Caco-2 (cell line): ENCODE measurements at regions of chr20 and their contacts with region 1.

Region 1: DNA sequence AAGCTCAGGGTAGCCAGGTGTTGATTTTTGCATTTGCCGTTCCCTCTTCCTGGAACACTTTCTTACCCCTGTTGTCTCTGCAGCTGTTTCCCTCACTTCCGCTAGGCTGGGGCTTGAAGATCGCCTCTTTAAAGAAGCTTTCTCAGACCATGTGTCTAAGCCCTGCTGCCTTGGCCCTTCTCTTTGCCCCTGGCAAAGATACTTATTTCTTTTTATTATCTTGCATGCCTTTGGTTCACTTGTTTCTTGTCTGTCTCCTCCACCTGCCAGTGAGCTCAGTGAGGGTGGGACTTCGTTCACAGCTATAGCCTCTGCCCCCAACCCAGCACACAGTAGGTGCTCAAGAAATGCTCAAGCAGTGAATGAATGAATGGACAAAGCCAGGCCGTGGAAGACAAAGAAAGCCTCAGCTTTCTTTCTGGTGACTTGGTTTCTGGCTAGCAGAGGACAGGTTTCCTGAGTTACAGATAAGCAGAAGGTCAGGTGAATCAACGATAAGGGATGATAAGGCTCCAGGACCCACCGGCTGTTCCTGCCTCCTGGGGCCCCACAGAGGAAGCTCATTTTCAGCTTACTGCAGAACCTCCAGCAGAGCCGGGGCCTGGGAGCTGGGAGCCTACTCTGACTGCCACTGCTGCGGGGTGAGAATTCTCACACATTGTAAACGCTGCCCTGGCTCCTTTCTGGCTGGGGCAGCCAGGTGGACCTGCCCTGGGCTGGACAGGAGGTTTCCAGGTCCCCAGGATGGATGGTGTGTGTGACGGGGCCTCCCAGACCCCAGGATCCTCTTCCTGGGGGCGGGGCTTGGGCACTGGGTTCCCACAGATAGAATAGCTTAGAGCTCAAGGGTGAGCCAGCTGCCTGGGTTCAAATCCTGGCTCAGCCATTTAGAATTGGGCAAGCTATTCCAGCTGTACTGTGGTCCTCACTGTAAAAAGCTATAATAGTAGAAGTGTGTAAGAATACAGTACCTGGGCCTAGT is 29.8 kb downstream of the SNAI1 start:
- DNase-seq: peak; percentile 87 to 95
- H3K4me3 ChIP-seq: no peak overlapping the region
- H3K4me3 Mint-ChIP-seq: no peak overlapping the region
- H3K27ac Mint-ChIP-seq: peak overlapping the region; percentile 68
- H3K4me1 ChIP-seq: peaks cover 44% of the 10 kb centered on the region
- H3K4me1 Mint-ChIP-seq: peaks cover 29% of the 10 kb centered on the region
- H3K27me3 ChIP-seq: no peaks in the 10 kb centered on the region
- H3K27me3 Mint-ChIP-seq: no peaks in the 10 kb centered on the region
- CTCF ChIP-seq: no peak

Region 2: DNA sequence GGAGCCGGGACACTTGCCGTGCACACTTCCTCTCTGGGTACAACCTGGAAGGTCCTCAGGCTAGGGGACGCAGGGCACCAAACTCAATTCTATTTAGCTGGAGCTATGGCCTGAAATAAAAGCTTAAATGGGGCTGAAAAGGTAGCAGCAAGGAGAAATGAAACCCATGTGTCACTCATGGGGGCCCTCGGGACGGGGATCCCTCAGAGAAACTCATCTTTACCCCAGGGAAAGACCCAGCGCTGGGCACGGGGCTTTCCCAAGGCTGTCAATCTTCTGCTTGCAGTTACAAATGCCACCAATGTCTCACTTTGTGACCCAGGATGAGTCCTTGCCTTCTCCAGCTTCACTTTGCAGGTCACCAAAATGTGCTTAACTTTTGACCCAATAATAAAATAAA is 13.2 kb before region 1 on chr20:
- CTCF ChIA-PET with region 1: interaction called, 3 read pairs
- POLR2A ChIA-PET with region 1: interaction called, 4 read pairs
- intact Hi-C with region 1: loop called (anchors 2 kb)
- DNase-seq: no peak
- H3K4me3 ChIP-seq: no peak overlapping the region
- H3K4me3 Mint-ChIP-seq: no peak overlapping the region
- H3K27ac Mint-ChIP-seq: no peak overlapping the region
- H3K4me1 ChIP-seq: peaks cover 20% of the 10 kb centered on the region
- H3K4me1 Mint-ChIP-seq: peaks cover 18% of the 10 kb centered on the region
- H3K27me3 ChIP-seq: no peaks in the 10 kb centered on the region
- H3K27me3 Mint-ChIP-seq: no peaks in the 10 kb centered on the region
- CTCF ChIP-seq: no peak

Region 3: DNA sequence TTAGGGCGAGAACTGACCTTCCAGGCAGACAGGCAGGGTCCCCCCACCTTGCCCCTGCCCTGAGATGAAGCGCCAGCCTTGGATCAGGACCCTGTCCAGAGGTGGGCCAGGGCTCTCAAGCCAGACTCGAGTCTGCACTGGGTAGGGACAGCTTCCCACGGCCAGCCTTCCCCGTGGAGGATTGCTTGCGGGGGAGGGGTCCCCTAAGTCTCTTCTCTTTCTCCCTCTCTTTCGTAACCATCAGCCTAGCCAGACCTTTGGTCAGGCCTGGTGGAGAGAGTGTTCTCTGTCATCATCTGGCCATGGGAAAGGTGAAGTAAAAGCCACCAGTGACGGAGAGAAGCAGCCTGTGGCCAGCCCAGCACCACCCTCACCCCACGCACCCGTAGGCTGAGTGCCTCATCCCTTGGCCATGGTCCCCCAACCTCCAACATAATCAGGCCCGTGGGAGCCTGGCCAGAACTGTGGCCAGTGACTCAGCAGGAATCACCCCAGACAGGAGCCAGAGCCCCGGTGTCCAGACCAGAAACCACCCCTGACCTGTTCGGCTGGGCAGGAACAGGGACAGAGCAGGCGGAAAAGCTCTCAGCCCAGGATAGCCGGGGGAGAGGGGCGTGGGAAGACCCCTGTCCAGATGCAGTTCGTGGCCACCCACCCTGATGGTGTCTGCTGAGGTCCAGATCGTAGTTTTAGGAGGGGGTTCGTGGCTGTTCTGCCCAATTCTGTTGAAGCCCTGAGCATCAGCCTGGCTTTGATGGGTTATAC is 17.3 kb after region 1 on chr20:
- CTCF ChIA-PET with region 1: interaction called, 3 read pairs
- POLR2A ChIA-PET with region 1: no interaction called
- intact Hi-C with region 1: loop called (anchors 1 kb)
- DNase-seq: peak; percentile 87 to 91
- H3K4me3 ChIP-seq: no peak overlapping the region
- H3K4me3 Mint-ChIP-seq: no peak overlapping the region
- H3K27ac Mint-ChIP-seq: peak overlapping the region; percentile 88
- H3K4me1 ChIP-seq: peaks cover 52% of the 10 kb centered on the region
- H3K4me1 Mint-ChIP-seq: peaks cover 41% of the 10 kb centered on the region
- H3K27me3 ChIP-seq: no peaks in the 10 kb centered on the region
- H3K27me3 Mint-ChIP-seq: no peaks in the 10 kb centered on the region
- CTCF ChIP-seq: no peak

Region 4: DNA sequence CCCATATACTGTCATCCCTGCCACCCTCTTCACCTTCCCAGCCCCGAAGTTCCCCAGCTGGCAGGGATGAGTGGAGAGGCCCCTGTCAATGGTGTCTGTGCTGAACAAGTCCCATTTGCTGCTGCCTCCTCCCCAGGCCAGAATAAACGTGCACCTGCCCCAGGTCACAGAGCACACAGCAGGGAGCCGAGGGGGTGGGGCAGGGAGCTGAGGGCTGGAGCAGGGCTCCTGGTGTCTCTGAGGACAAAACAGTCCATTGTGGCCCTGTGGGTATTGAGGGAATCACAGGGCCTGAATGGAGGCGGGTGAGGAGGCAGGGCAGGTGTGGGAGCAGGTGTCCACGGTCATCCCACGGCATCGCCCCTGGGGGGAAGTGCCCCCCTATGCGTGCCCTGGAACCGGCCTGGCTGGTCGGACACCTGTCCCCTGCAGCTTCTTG is 26.0 kb after region 1 on chr20:
- CTCF ChIA-PET with region 1: interaction called, 6 read pairs
- POLR2A ChIA-PET with region 1: no interaction called
- intact Hi-C with region 1: loop called (anchors 2 kb)
- DNase-seq: peak; percentile 85 to 90
- H3K4me3 ChIP-seq: no peak overlapping the region
- H3K4me3 Mint-ChIP-seq: no peak overlapping the region
- H3K27ac Mint-ChIP-seq: peak overlapping the region; percentile 51
- H3K4me1 ChIP-seq: peaks cover 52% of the 10 kb centered on the region
- H3K4me1 Mint-ChIP-seq: peaks cover 37% of the 10 kb centered on the region
- H3K27me3 ChIP-seq: no peaks in the 10 kb centered on the region
- H3K27me3 Mint-ChIP-seq: no peaks in the 10 kb centered on the region
- CTCF ChIP-seq: no peak

Region 5: DNA sequence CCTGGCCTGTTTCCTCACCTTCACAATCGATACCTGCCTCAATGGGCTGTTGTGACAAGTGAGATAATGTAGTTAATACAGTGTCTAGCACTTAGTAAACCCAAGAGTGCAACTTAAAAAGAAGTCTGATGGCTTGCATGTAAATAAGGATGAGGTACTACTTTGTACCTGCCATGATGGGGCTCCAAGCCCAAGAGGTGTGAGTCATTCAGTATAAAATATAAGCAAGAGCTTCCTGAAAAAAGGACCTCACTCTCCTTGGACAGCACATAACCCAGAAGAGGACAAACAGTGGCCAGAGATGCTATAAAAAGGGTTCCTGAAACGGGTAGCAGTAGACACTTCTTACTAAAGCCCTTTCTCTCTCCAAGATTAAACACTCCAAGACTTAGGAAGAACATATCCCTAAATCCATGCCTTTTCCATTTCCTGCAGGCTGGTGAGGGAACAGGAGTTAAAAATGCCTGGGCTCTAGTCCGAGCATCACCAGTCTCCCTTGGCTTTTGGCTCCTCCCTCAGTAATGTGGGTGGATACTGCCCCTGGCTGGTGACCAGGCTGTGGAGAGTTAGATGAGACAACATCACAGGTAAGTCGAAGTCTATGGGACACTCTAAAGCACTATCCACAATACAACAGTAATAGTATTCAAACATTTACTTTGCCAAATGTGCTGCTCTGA is 96.1 kb after region 1 on chr20:
- CTCF ChIA-PET with region 1: no interaction called
- POLR2A ChIA-PET with region 1: no interaction called
- intact Hi-C with region 1: no loop called
- DNase-seq: peak in 1 of 2 experiments; percentile 38
- H3K4me3 ChIP-seq: no peak overlapping the region
- H3K4me3 Mint-ChIP-seq: no peak overlapping the region
- H3K27ac Mint-ChIP-seq: peak overlapping the region; percentile 57
- H3K4me1 ChIP-seq: peaks cover 67% of the 10 kb centered on the region
- H3K4me1 Mint-ChIP-seq: peaks cover 57% of the 10 kb centered on the region
- H3K27me3 ChIP-seq: no peaks in the 10 kb centered on the region
- H3K27me3 Mint-ChIP-seq: no peaks in the 10 kb centered on the region
- CTCF ChIP-seq: no peak